Adrenal gland (tissue), 19 donors: ENCODE measurements at regions of chr11 and their contacts with region 1.

Region 1: DNA sequence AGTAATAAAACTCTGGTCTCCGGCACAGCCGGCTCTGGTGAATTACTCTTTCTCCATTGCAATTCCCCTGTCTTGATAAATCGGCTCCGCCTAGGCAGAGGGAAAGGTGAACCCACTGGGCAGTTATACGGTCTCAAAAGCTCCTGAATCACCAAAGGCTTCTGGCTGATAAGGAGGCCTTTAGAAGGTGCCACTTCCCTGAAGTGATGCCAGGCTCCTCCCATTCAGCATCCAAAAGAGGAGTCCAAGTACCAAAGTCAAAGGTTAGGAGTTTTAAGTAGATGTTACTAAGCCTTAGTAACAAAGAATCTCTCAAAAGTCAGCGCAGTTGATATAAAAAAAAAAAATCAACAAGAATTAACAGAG is 11.8 kb upstream of the ALKBH8 start:
- DNase-seq: no peak
- H3K4me3 ChIP-seq: no peak overlapping the region
- H3K27ac ChIP-seq: no peak overlapping the region
- H3K4me1 ChIP-seq: no peaks in the 10 kb centered on the region
- H3K27me3 ChIP-seq: peaks cover 6% of the 10 kb centered on the region
- CTCF ChIP-seq: no peak
- POLR2A ChIP-seq: no peak

Region 2: DNA sequence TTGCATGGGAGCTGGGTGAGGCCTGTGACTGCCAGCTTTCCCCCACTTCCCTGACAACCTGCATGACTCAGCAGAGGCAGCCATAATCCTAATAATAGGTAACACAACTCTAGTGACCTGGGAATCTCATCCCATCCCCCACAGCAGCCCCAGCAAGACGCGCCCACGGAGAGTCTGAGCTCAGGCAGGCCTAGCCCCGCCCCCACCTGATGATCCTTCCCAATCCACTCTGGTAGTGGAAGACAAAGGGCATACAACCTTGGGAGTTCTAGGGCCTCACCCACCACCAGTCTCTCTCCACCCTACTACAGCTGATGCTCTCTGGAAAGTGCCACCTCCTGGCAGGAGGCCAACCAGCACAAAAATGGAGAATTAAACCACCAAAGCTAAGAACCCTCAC is 180.0 kb before region 1 on chr11:
- intact Hi-C with region 1: no loop called
- DNase-seq: no peak
- H3K4me3 ChIP-seq: no peak overlapping the region
- H3K27ac ChIP-seq: no peak overlapping the region
- H3K4me1 ChIP-seq: no peaks in the 10 kb centered on the region
- H3K27me3 ChIP-seq: no peaks in the 10 kb centered on the region
- CTCF ChIP-seq: no peak
- POLR2A ChIP-seq: no peak

Region 3: DNA sequence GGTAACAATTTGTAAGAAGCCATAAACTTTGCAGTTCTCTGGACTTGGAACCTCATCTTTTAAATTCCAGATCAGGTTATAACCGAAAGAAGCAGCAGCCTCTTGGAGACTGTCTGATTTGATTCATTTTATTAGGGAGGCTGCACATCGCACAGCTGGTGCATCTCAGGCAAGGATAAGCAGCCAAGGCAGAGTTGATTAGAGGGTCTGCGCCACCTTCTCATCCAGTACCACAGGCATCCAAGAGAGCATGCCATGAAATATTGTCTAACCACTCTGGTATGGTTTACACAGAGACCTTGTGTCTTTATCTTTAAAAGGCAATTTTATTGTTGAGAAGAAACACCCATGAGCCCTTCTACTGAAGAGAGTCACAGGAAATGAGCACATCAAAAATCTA is 103.5 kb before region 1 on chr11:
- intact Hi-C with region 1: no loop called
- DNase-seq: no peak
- H3K4me3 ChIP-seq: no peak overlapping the region
- H3K27ac ChIP-seq: no peak overlapping the region
- H3K4me1 ChIP-seq: no peaks in the 10 kb centered on the region
- H3K27me3 ChIP-seq: peaks cover 11% of the 10 kb centered on the region
- CTCF ChIP-seq: no peak
- POLR2A ChIP-seq: no peak

Region 4: DNA sequence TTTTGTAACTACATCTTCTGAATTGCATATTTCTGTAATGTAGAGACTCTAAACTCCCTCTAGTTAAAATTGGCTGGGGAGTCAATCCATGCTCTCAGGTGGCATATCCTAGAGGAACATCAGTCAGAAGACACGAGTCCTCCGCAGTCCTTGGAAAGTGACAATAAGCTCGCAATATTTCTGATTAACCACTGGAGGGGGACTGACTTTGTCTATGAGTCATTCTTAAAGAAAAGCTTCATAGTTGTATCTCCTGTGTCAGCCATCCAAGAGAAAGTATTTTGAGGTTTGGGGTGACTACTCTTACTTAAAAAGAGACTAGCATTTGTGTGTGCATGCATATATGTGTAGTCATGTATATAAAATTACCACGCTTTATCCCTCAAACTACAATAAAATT is 74.3 kb after region 1 on chr11:
- intact Hi-C with region 1: no loop called
- DNase-seq: no peak
- H3K4me3 ChIP-seq: no peak overlapping the region
- H3K27ac ChIP-seq: no peak overlapping the region
- H3K4me1 ChIP-seq: no peaks in the 10 kb centered on the region
- H3K27me3 ChIP-seq: peaks cover 3% of the 10 kb centered on the region
- CTCF ChIP-seq: no peak
- POLR2A ChIP-seq: no peak

Region 5: DNA sequence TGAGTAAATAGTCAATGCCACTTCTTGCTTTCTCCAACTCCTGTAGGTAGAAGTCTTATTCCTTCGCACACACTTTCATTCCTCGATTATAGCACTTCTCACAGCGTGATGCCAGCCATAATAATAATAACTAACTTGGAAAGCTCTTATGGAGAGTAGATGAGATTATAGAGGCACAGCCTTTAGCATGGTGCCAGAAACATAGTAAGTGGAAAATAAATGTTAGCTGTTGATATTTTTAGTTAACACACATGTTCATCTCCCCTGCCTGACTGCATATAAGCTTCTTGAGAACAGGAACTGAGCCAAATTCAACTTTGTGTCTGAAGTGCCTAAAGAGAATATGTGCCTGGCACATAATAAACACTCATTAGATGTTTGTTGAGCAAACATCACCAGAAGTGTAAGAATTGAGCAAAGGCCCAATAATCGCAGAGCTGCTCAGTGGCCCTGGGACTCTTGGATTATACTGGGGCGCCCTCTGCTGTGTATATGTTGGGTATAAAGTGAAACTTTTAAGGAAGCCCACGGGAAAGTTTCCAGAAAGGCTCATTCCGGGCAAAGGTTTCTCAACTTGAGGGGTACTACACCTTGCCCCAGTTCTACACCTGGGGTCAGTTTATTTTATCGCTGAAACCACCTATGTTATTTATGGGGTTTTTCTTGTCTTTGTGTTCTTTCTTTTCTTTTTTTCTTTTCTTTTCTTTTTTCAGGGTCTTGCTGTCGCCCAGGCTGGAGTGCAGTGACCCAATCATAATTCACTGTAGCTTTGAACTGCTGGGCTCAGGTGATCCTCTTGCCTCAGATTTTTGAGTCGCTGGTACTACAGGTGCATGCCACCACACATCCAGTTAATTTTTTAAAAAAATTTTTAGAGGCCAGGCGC is 112.2 kb after region 1 on chr11:
- intact Hi-C with region 1: loop called (anchors 5 kb)
- DNase-seq: peak; percentile 75 to 91 (median 79)
- H3K4me3 ChIP-seq: no peak overlapping the region
- H3K27ac ChIP-seq: no peak overlapping the region
- H3K4me1 ChIP-seq: no peaks in the 10 kb centered on the region
- H3K27me3 ChIP-seq: peaks cover 8% of the 10 kb centered on the region
- CTCF ChIP-seq: peak; percentile 48 to 76 (median 74)
- POLR2A ChIP-seq: no peak